ENCODE measurements at regions of chr14 and their contacts with region 1.

Region 1: DNA sequence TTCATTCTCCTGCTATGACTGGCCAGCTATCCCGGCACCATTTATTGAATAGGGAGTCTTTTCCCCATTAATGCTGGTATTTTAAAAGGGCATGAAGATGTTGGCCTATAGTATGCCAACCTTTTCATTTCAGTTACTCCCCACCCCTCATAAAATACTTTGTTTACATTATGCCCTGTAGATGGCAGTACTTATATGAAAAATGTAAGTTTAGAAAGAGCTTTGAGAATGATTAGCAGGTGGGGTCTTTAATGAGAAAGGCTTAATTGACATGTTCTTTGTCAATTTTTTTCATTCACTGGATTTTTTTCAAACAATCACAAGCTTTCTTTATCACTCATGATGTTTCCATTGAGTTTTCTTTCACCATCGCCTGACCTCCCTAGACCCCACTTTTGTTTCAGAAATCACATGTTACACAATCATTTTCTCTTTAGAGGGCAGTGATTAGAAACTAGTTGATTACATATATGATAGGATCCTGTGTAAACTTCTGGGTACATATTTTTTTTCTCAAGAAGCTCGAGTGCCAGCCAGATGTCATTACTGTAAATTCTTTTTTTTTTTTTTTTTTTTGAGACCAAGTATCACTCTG is 62.6 kb upstream of the PSMA6 start:
- DNase-seq: peak; percentile 24
- H3K4me3 Mint-ChIP-seq: no peak overlapping the region
- H3K27ac Mint-ChIP-seq: peak overlapping the region; percentile 35
- H3K4me1 Mint-ChIP-seq: peaks cover 23% of the 10 kb centered on the region
- H3K27me3 Mint-ChIP-seq: no peaks in the 10 kb centered on the region
- CTCF ChIP-seq: peak; percentile 34

Region 2: GRCh38 chr14:35140718-35141581 is 88.6 kb before region 1 on chr14:
- CTCF ChIA-PET with region 1: interaction called, 5 read pairs
- POLR2A ChIA-PET with region 1: interaction called, 3 read pairs
- intact Hi-C with region 1: loop called (anchors 5 kb)
- DNase-seq: no peak
- H3K4me3 Mint-ChIP-seq: no peak overlapping the region
- H3K27ac Mint-ChIP-seq: no peak overlapping the region
- H3K4me1 Mint-ChIP-seq: peaks cover 4% of the 10 kb centered on the region
- H3K27me3 Mint-ChIP-seq: no peaks in the 10 kb centered on the region
- CTCF ChIP-seq: peak; percentile 19

Region 3: DNA sequence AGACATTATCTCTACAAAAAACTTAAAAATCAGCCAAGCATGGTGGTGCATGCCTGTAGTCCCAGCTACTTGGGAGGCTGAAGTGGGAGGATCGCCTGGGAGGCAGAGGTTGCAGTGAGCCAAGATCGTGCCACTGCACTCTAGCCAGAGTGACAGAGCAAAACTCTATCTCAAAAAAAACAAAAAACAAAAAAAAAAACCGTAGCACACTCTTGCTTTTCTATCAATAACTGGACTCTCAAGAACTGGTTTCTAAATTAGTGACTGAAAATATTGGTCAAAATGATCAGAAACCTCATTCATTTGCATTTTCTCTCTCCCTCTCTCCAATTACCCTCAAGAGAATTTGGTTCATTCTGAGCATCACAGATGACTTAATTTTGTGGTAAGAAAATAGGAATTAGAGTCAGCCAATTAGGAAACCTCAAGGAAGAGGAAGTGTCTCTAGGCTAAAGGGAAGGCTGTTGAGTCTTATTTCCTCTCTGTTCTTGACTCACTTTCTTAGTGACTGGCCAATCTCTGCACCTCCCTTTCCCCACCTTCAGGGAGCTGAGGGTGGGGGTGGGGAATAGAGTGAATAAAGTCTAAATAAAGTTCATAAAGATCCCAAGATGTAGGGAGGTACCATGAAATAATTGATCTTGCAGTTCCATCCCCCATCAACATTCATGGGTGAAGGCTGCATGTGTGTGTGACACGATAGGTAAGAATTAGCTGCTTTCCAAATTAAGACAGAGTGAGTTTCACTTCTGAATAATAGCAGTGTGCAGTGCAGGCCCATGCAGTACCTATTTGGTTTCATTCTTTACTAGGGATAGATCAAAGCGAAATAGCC is 55.8 kb after region 1 on chr14:
- CTCF ChIA-PET with region 1: interaction called, 11 read pairs
- POLR2A ChIA-PET with region 1: interaction called, 4 read pairs
- intact Hi-C with region 1: no loop called
- DNase-seq: no peak
- H3K4me3 Mint-ChIP-seq: no peak overlapping the region
- H3K27ac Mint-ChIP-seq: peak overlapping the region; percentile 19
- H3K4me1 Mint-ChIP-seq: peaks cover 8% of the 10 kb centered on the region
- H3K27me3 Mint-ChIP-seq: no peaks in the 10 kb centered on the region
- CTCF ChIP-seq: no peak

Measured in MCF 10A (cell line).